HEK293T (cell line): ENCODE measurements at regions of chr5 and their contacts with region 1.

Region 1: DNA sequence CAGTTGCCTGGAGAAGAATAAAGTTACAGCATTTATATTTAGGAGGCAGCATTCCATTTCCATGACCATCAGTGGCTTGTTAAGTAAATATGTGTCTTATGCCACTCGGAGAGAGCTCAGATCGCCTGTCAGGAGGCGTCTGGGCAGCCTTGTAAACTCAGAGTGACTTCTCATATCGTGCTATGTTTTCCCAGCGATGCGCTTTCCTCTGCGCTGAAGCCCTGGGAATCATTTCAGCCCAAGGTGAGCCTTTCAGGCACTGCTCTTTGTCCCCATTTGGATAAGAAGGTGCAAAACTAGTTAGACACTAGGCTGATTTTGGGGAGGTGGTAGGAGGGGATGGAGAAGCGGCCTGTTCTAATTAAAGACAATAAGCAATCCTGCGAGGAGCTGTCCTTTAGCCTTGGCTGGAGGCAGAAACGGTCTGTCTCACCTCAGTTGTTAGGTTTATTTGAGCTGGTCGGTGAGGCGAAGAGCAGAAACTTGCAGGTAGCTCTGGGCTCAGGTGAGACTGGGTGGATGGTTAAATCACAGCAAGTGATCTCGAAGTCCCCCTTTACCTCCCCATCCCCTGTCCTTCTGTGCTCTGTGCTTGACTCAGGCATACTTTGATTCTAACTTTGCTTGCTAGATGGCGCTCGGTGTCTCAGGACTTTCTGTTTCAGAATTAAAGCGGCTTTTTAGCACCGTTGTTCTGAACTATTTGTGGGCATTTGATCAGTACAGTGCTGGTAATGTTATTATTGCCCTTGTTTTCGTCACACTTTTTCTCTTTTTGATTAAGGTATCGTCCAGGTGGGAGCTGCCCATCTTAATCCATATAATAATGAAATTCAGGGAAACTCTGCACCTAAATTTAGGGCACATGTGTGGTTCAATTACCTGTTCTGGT is 24.6 kb downstream of the NR2F1 start:
- DNase-seq: peak; percentile 33

Region 2: GRCh38 chr5:93582677-93583438 is 24.8 kb before region 1 on chr5 and contains the start of gene NR2F1:
- CTCF ChIA-PET with region 1: interaction called, 9 read pairs
- POLR2A ChIA-PET with region 1: interaction called, 151 read pairs
- DNase-seq: peak; percentile 75

Region 3: DNA sequence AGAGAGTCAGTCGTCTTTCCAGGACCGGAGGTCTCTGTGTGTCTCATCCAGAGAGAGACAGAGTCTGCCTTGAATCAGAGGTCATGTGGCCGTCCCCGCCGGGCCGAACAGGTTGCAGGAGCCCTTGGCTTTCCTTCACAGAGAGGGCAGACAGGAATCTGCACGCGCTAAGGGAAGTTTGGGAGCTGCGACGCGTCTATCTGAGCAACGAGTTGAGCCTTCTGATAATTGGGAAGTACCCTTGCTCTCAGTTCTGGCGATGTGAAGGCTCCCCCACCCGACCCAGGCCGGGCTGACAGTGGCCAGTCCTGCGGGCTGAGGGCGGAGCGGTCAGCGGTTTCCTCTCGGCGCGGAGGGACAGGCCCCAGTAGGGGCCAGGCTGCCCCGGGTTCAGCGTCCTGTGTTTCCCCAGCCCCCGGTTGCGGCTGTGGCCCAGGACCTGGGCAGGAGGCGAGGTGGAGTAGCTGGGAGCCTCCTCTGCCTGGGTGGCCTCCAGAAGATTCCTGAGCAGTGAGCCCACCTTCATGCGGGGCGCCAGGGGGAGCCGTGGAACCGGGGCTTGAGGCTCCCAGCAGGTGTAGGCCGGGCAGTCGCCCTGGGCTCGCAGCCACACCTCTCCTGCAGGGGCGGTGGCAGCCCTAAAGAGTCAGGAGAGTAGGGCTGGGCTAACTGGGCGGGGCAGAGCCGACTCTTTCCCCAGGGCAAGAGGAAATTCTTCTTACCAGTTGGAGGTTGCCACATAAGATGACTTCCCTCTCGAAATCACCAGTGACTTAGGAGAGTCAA is 10.7 kb before region 1 on chr5:
- CTCF ChIA-PET with region 1: interaction called, 6 read pairs
- POLR2A ChIA-PET with region 1: interaction called, 16 read pairs
- DNase-seq: peak; percentile 65

Region 4: GRCh38 chr5:93620487-93621326 is 13.1 kb after region 1 on chr5:
- CTCF ChIA-PET with region 1: interaction called, 5 read pairs
- POLR2A ChIA-PET with region 1: interaction called, 17 read pairs
- DNase-seq: peak; percentile 78

Region 5: DNA sequence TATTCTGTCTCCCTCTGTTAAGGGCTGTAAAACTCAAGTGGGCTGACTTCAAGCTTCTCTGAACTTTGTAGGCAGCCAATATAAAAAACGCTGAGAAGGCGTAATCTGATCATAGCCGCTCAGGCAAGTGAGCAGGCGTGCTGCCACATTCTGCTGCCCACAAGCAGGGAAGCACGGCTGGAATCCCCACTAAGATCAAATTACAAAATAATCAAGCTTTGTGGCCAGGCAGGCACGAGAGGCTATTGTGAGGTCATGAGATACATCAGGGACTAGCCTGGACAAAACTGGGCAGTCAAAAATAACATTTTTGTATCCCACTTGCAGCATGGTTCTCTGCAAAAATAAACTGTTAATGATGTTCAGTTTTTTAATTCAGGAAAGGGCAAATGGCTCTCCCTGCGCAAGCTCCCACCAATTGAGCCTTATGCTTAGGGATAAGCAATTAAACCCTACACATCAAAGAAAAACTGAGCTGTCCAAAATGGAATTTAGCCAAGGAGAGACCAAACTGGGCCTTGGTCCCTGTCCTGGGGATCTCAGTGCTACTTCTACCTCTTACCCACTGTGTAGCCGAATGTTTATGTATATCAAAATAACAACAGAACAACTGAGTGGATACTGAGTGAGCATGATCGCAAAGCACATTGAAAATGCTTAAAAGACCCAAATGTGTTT is 69.9 kb after region 1 on chr5:
- CTCF ChIA-PET with region 1: interaction called, 14 read pairs
- POLR2A ChIA-PET with region 1: interaction called, 4 read pairs
- DNase-seq: peak; percentile 75

Region 6: GRCh38 chr5:93705896-93706295 is 98.3 kb after region 1 on chr5:
- CTCF ChIA-PET with region 1: no interaction called
- POLR2A ChIA-PET with region 1: no interaction called
- DNase-seq: no peak

Region 7: GRCh38 chr5:93741136-93741811 is 133.7 kb after region 1 on chr5 and contains the start of gene POU5F2:
- CTCF ChIA-PET with region 1: no interaction called
- POLR2A ChIA-PET with region 1: no interaction called
- DNase-seq: no peak

Region 8: GRCh38 chr5:93800988-93801811 is 193.6 kb after region 1 on chr5:
- CTCF ChIA-PET with region 1: interaction called, 13 read pairs
- POLR2A ChIA-PET with region 1: no interaction called
- DNase-seq: no peak